H1 (cell line): ENCODE measurements at regions of chr3 and their contacts with region 1.

Region 1: DNA sequence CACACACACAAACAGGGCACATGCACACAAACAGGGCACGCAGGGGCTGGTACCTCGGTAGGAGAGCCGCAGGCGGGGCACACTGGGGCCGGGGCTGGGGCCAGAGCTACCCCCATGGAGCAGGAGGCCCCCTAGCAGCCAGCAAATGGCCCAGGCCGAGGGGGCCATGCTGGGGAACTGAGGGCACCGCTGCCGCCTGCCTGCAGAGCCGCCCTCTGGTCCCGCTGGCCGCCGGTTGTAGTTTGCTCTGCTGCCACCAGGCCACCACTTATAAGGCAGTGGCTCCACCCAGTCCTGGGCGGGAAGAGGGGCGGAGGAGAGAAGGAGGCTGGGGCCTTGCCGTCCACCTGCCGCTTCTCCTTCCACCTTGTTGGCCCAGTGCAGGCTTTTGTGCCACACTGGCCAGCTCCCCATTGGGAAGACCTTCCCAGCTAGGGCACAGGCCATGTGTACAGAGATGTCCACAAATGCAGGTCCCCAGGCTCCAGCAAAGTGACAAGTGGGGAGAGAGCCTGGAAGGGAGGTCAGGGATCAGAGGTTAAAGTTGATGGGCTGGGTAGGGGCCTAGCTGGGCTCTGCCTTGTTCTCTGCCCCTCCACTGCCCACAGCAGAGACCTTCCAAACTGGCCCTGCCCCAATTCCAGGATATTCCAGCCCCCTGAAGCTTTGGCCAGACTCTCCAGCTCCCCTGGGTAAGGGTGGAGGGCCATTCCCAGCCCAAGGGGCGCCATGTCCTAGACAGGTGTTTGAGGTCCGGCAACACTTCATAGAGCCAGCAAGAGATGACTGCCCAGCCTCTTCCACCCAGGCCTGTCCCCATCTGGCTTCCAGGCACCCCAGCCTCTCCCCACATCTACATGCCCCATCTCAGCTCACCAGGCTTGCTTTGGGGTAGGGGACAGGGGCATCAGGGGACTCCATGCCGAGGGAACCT is at the start of gene SEMA3G:
- DNase-seq: peak; percentile 56 to 87
- H3K4me3 ChIP-seq: peak within 1 kb of the TSS in 1 of 4 experiments; percentile 38; a peak in 2 of 8 replicates
- H3K27ac ChIP-seq: no peak within 1 kb of the TSS
- H3K4me1 ChIP-seq: peaks cover 0 to 14% (median 7%) of the 10 kb centered on the region in 4 experiments; a peak in 5 of 7 replicates
- H3K27me3 ChIP-seq: 0 out of 7 replicates have a peak, but pooled peaks cover 0 to 2% (median 0%) of the 10 kb centered on the region in 4 experiments
- CTCF ChIP-seq: peak in 2 of 3 experiments; percentile 73; a peak in 3 of 4 replicates
- EP300 ChIP-seq: no peak
- POLR2A ChIP-seq: peak in 1 of 2 experiments; percentile 71; a peak in 2 of 3 replicates
- RAD21 ChIP-seq: peak in 1 of 2 experiments; percentile 33; a peak in 2 of 4 replicates
- total RNA-seq, gene SEMA3G: 1.5 TPM in 2 replicates

Region 2: DNA sequence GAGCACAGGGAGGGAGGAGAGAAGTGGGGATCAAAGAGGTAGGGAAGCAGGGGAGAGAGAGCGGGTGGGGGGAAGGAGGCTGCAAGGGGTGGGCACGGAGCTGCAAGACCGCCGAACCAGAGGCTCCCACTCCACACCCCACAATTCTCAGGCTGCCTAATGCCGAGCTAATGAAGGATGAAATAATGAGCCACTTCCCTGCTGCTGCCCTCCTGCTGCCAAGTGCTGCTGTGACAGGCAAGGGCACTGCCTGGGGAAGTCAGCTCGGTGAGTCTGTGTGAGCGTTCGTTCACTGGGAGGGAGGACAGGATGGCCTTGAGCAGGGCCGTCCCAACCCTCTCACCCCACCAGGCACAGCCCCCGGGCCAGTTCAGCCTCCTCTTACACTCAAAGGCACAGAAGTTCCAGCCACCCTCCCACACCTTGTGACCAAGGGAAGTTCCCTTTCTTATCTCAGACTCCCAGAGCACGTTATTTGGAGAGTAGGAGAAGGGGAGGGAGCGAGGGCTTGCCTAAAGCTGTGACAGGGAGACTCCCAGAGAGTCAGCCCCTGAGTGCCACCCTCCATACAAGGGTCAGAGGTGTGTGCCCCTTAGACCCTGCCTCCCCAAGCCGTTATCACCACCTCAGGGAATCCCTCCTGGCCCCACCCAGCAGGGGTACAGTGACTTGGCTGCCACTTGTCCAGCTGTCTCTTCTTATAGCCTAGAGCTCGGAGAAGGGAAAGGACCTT is 145.1 kb before region 1 on chr3:
- CTCF ChIA-PET with region 1: interaction called, 17 read pairs
- POLR2A ChIA-PET with region 1: interaction called, 6 read pairs
- DNase-seq: peak in 1 of 2 experiments; percentile 67
- H3K4me3 ChIP-seq: peak overlapping the region; percentile 7 to 57 (median 44); a peak in 7 of 8 replicates
- H3K27ac ChIP-seq: no peak overlapping the region
- H3K4me1 ChIP-seq: peaks cover 0 to 26% (median 20%) of the 10 kb centered on the region in 4 experiments; a peak in 6 of 7 replicates
- H3K27me3 ChIP-seq: peaks cover 0 to 8% (median 2%) of the 10 kb centered on the region in 4 experiments; a peak in 3 of 7 replicates
- CTCF ChIP-seq: peak in 1 of 3 experiments; percentile 15; a peak in 1 of 4 replicates
- EP300 ChIP-seq: no peak
- POLR2A ChIP-seq: no peak
- RAD21 ChIP-seq: no peak

Region 3: GRCh38 chr3:52372822-52373504 is 72.2 kb before region 1 on chr3:
- CTCF ChIA-PET with region 1: interaction called, 24 read pairs
- POLR2A ChIA-PET with region 1: no interaction called
- DNase-seq: peak in 1 of 2 experiments; percentile 81
- H3K4me3 ChIP-seq: peak overlapping the region in 2 of 4 experiments; percentile 16 to 56; a peak in 5 of 8 replicates
- H3K27ac ChIP-seq: no peak overlapping the region
- H3K4me1 ChIP-seq: peaks cover 0 to 15% (median 5%) of the 10 kb centered on the region in 4 experiments; a peak in 4 of 7 replicates
- H3K27me3 ChIP-seq: peaks cover 0 to 1% (median 0%) of the 10 kb centered on the region in 4 experiments; a peak in 3 of 7 replicates
- CTCF ChIP-seq: peak in 1 of 3 experiments; percentile 35; a peak in 1 of 4 replicates
- EP300 ChIP-seq: no peak
- POLR2A ChIP-seq: no peak
- RAD21 ChIP-seq: no peak

Region 4: GRCh38 chr3:52406231-52406661 is 38.9 kb before region 1 on chr3:
- CTCF ChIA-PET with region 1: interaction called, 12 read pairs
- POLR2A ChIA-PET with region 1: no interaction called
- DNase-seq: no peak
- H3K4me3 ChIP-seq: no peak overlapping the region
- H3K27ac ChIP-seq: no peak overlapping the region
- H3K4me1 ChIP-seq: peaks cover 0 to 10% (median 1%) of the 10 kb centered on the region in 4 experiments; a peak in 5 of 7 replicates
- H3K27me3 ChIP-seq: no peaks in the 10 kb centered on the region
- CTCF ChIP-seq: no peak
- EP300 ChIP-seq: no peak
- POLR2A ChIP-seq: no peak
- RAD21 ChIP-seq: no peak

Region 5: DNA sequence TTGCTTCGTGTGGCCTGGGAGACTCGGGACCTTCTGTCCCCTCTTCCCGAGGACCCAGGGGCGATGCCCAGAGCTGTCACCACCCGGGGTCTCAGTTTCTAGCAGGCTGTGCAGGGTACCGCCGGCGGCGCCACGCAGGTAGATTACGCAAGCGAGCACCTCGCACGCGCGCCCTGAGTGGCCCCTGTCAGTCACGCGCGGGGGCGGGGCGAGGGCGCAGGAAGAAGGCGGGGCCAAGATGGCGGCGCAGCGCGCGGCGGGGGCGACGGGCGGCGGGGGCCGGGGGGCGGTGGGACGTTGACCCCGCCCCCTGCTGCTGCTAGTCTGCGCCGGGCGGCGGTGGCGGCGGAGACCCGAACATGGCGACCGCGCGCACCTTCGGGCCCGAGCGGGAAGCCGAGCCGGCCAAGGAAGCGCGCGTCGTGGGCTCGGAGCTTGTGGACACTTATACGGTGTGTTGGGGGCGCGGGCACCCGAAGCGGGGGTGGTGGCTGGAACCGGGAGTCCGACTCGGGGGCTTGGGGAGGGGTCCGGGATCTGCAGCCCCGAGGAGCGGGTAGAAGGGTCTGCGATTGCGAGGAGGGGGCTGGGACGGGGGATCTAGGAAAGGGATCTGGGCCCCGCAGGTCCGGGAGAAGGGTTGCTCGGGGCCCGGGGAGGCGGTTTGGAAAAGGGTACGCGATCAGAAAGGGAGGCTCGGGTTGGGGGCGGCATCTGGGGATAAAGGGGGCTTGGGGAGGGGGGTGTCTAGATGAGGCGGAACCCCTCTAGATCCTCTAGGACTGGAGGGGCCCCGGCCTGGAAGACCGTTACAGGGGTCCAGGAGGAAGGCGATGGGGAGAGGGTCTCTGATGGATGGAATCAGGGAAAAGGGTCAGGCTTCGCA is 10.4 kb after region 1 on chr3 and contains the start of gene NISCH:
- CTCF ChIA-PET with region 1: interaction called, 45 read pairs
- POLR2A ChIA-PET with region 1: interaction called, 8 read pairs
- DNase-seq: peak in 1 of 2 experiments; percentile 96
- H3K4me3 ChIP-seq: peak within 1 kb of the TSS; percentile 63 to 98 (median 87)
- H3K27ac ChIP-seq: peak within 1 kb of the TSS; percentile 1; the same call in 1 of the 2 replicates
- H3K4me1 ChIP-seq: peaks cover 0 to 24% (median 8%) of the 10 kb centered on the region in 4 experiments; a peak in 6 of 7 replicates
- H3K27me3 ChIP-seq: no peaks in the 10 kb centered on the region
- CTCF ChIP-seq: no peak
- EP300 ChIP-seq: no peak
- POLR2A ChIP-seq: peak in 1 of 2 experiments; percentile 55; a peak in 1 of 3 replicates
- RAD21 ChIP-seq: no peak
- total RNA-seq, gene NISCH: 67.0 and 71.9 TPM in 2 replicates

Region 6: GRCh38 chr3:52503788-52504424 is 58.8 kb after region 1 on chr3:
- CTCF ChIA-PET with region 1: interaction called, 13 read pairs
- POLR2A ChIA-PET with region 1: interaction called, 3 read pairs
- DNase-seq: no peak
- H3K4me3 ChIP-seq: no peak overlapping the region
- H3K27ac ChIP-seq: no peak overlapping the region
- H3K4me1 ChIP-seq: peaks cover 0 to 9% (median 5%) of the 10 kb centered on the region in 4 experiments; a peak in 4 of 7 replicates
- H3K27me3 ChIP-seq: no peaks in the 10 kb centered on the region; a peak in 1 of 7 replicates
- CTCF ChIP-seq: peak in 1 of 3 experiments; percentile 4; a peak in 1 of 4 replicates
- EP300 ChIP-seq: no peak
- POLR2A ChIP-seq: no peak
- RAD21 ChIP-seq: no peak